Activated CD4-positive, alpha-beta T cell treated with anti-CD3 and anti-CD28 coated beads for 36 hours (primary cell): ENCODE measurements at regions of chr17 and their contacts with region 1.

Region 1: DNA sequence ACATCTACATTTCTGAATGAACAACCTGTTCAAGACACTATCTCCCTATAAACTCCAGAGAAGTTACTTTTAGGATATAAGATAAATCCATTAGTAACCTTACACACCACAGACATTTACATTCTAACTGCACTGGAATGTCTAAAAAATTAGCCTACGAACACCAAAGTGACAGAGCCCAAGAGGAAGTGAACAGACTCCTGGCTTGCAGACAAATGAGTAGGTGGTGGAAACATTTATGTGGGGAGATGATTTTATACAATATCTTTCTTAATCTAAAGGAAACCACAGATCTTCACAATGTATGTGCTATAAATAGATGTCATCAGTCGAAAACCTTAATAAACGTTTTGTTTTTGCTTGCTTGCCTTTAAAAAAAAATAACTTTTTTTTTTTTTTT is 18.8 kb downstream of the ZNF652 start:
- DNase-seq: peak; percentile 38
- ATAC-seq: peak; percentile 70
- H3K4me3 Mint-ChIP-seq: peak overlapping the region; percentile 55
- H3K27ac Mint-ChIP-seq: peak overlapping the region; percentile 71
- H3K4me1 Mint-ChIP-seq: peaks cover 64% of the 10 kb centered on the region
- H3K27me3 Mint-ChIP-seq: peaks cover 2% of the 10 kb centered on the region

Region 2: GRCh38 chr17:48915459-48916282 is 427.6 kb before region 1 on chr17:
- CTCF ChIA-PET with region 1: no interaction called
- POLR2A ChIA-PET with region 1: no interaction called
- intact Hi-C with region 1: loop called in 1 of 2 experiments (anchors 10 kb)
- DNase-seq: peak; percentile 77
- ATAC-seq: peak; percentile 95
- H3K4me3 Mint-ChIP-seq: peak overlapping the region; percentile 73
- H3K27ac Mint-ChIP-seq: peak overlapping the region; percentile 96
- H3K4me1 Mint-ChIP-seq: peaks cover 59% of the 10 kb centered on the region
- H3K27me3 Mint-ChIP-seq: no peaks in the 10 kb centered on the region

Region 3: DNA sequence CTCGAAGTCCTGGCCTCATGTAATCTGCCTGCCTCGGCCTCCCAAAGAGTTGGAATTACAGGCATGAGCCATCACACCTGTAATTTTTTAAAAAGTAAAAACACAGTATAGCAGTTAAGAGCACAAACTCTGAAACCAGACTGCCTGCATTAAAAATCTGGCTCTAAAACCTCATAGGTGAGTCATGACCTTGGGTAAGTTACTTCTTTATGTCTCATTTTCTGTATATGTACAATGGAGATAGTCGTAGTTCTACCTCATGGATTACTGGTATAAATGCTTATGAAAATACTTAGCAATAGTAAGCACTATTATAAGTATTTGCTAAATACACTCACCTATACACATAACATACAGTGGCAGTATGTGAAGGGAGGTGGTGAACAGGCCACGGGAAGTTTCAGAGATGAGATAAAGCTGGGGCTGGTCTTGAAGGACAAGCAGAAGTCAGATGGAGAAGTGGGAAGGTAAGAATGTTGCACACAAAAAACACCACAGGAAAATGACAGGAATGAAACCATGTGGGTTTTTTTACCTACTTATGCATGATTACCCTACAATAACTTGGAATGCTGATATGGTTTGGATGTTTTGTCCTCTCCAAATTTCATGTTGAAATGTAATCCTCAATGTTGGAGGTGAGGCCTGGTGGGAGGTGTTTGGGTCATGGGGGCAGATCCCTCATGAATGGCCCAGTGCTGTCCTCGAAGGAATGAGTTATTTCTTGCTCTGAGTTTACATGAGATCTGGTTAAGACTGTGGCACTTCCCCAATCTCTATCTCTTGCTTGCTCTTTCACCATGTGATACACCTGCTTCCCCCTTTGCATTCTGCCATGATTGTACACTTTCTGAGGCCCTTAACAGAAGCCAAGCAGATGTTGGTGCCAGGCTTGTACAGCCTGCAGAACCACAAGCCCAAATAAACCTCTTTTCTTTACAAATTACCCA is 15.2 kb before region 1 on chr17:
- CTCF ChIA-PET with region 1: interaction called, 7 read pairs
- POLR2A ChIA-PET with region 1: no interaction called
- intact Hi-C with region 1: loop called in 1 of 2 experiments (anchors 1 kb)
- DNase-seq: peak; percentile 19
- ATAC-seq: peak; percentile 92
- H3K4me3 Mint-ChIP-seq: no peak overlapping the region
- H3K27ac Mint-ChIP-seq: peak overlapping the region; percentile 67
- H3K4me1 Mint-ChIP-seq: peaks cover 44% of the 10 kb centered on the region
- H3K27me3 Mint-ChIP-seq: no peaks in the 10 kb centered on the region

Region 4: GRCh38 chr17:49370971-49371834 is 27.9 kb after region 1 on chr17:
- CTCF ChIA-PET with region 1: interaction called, 19 read pairs
- POLR2A ChIA-PET with region 1: no interaction called
- intact Hi-C with region 1: no loop called
- DNase-seq: no peak
- ATAC-seq: no peak
- H3K4me3 Mint-ChIP-seq: no peak overlapping the region
- H3K27ac Mint-ChIP-seq: no peak overlapping the region
- H3K4me1 Mint-ChIP-seq: no peaks in the 10 kb centered on the region
- H3K27me3 Mint-ChIP-seq: no peaks in the 10 kb centered on the region

Region 5: DNA sequence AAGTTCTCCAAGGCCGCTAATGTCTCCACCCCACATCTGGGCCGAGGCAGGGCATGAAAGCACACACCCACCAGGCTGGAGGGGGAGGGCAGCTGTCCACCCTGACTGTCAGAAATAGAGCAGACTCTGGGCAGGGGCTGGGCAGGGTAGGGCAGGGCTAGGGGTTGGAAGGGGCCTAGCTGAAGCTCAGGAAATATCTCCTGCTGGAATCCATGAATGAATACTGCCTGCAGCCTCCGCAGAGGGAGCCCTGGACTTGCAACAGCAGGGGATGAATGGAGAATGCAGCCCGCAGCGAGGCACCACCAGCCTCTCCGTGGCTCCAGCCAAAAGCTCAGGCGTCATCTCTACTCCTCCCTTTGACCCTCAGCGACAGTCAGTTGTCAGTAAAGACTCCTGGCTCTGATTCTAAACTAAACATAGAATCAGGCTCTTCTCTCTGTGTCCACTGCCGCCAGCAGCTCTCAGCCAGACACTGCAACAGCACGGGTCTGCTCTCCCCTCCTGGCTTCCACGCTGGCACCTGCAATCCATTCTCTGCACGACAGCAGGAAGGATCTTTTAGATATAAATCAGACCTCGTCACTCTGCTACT is 127.9 kb after region 1 on chr17:
- CTCF ChIA-PET with region 1: no interaction called
- POLR2A ChIA-PET with region 1: no interaction called
- intact Hi-C with region 1: no loop called
- DNase-seq: no peak
- ATAC-seq: no peak
- H3K4me3 Mint-ChIP-seq: no peak overlapping the region
- H3K27ac Mint-ChIP-seq: no peak overlapping the region
- H3K4me1 Mint-ChIP-seq: no peaks in the 10 kb centered on the region
- H3K27me3 Mint-ChIP-seq: peaks cover 47% of the 10 kb centered on the region